ENCODE measurements at regions of chr18 and their contacts with region 1.

Region 1: DNA sequence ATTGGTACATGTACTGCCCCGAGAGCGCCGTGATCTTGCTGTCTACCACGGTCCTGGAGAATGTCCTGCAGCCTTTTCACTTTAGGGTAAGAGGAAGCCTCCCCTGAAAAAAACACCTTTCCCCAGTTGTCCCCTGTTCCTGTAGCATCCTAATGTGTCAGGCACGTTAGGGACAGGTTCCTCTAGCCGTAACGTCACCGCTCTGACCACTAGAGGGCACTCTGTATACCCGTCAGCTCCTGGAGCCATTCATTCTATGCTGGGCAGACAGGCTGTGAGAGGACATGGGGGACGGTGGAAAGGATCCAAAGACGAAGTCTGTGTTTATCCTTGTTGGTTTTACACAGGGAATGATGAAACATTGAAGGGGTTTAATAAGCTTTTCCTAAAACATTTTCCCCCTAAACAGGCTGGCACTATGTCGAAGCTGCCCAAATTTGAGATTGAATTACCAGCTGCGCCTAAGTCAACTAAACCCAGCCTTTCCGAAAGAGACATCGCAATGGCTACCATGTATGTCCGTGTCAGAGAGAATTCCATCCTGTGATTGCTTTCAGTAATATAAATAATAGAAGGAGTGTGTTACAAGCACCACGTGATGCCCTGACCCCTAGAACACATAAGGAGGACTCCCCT is 12.7 kb downstream of the RMC1 start:
- DNase-seq: peak; percentile 39
- ATAC-seq: peak; percentile 99
- H3K4me3 ChIP-seq: no peak overlapping the region
- H3K27ac ChIP-seq: no peak overlapping the region
- H3K4me1 ChIP-seq: peaks cover 3% of the 10 kb centered on the region; the same call in 1 of the 2 replicates
- H3K27me3 ChIP-seq: no peaks in the 10 kb centered on the region
- CTCF ChIP-seq: peak; percentile 89 to 97 (median 94)
- EP300 ChIP-seq: no peak
- POLR2A ChIP-seq: no peak
- RAD21 ChIP-seq: peak; percentile 76

Region 2: DNA sequence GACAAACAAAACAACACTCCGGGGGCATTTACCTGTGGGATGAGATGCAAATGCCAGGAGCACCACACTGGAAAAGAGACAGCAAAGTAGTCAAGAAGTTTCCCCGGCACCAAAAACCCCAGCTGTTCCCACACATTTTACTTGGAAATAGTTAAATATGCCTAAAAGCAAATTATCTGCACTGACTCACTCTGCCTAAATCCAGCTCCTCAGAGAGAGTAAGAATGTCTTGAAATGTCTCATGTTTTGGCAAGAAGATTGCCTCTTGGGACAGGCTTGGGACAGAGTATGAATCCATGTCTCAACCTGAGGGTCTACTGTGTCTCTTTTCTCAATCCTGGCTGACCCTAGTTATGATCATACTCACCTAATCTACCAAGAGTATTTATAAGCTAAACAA is 150.4 kb before region 1 on chr18:
- CTCF ChIA-PET with region 1: no interaction called
- POLR2A ChIA-PET with region 1: no interaction called
- RAD21 ChIA-PET with region 1: no interaction called
- SMC1A ChIA-PET with region 1: no interaction called
- in situ Hi-C with region 1: no loop called
- intact Hi-C with region 1: no loop called
- DNase-seq: no peak
- ATAC-seq: no peak
- H3K4me3 ChIP-seq: no peak overlapping the region
- H3K27ac ChIP-seq: no peak overlapping the region
- H3K4me1 ChIP-seq: no peaks in the 10 kb centered on the region
- H3K27me3 ChIP-seq: no peaks in the 10 kb centered on the region
- CTCF ChIP-seq: no peak
- EP300 ChIP-seq: no peak
- POLR2A ChIP-seq: no peak
- RAD21 ChIP-seq: no peak

Region 3: DNA sequence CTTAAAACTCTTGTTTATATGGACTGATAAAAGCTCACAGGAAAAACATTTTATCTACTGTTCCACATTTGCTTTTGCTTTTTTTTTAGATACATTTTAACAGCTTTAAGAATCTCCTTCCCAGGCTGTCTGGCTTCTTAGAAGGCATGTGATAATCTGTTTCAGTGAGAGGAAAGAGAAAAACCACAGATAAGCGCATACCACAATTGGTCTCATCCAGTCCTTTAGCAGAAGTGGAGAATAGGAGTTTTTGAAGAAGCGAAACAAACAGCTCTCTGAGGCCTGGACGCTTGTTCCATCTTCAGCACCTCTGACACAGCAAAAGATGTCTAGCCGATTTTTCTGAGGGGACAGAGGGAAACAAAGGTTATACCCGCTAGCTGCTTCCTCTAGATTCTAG is 24.8 kb after region 1 on chr18:
- CTCF ChIA-PET with region 1: interaction called, 10 read pairs
- POLR2A ChIA-PET with region 1: interaction called, 7 read pairs
- RAD21 ChIA-PET with region 1: interaction called, 3 read pairs
- SMC1A ChIA-PET with region 1: interaction called, 5 read pairs
- in situ Hi-C with region 1: no loop called
- intact Hi-C with region 1: no loop called
- DNase-seq: peak; percentile 43
- ATAC-seq: peak; percentile 83
- H3K4me3 ChIP-seq: no peak overlapping the region
- H3K27ac ChIP-seq: peak overlapping the region; percentile 47
- H3K4me1 ChIP-seq: peaks cover 31% of the 10 kb centered on the region
- H3K27me3 ChIP-seq: no peaks in the 10 kb centered on the region
- CTCF ChIP-seq: no peak
- EP300 ChIP-seq: peak in 1 of 2 experiments; percentile 48; a peak in 1 of 4 replicates
- POLR2A ChIP-seq: no peak
- RAD21 ChIP-seq: no peak

Region 4: DNA sequence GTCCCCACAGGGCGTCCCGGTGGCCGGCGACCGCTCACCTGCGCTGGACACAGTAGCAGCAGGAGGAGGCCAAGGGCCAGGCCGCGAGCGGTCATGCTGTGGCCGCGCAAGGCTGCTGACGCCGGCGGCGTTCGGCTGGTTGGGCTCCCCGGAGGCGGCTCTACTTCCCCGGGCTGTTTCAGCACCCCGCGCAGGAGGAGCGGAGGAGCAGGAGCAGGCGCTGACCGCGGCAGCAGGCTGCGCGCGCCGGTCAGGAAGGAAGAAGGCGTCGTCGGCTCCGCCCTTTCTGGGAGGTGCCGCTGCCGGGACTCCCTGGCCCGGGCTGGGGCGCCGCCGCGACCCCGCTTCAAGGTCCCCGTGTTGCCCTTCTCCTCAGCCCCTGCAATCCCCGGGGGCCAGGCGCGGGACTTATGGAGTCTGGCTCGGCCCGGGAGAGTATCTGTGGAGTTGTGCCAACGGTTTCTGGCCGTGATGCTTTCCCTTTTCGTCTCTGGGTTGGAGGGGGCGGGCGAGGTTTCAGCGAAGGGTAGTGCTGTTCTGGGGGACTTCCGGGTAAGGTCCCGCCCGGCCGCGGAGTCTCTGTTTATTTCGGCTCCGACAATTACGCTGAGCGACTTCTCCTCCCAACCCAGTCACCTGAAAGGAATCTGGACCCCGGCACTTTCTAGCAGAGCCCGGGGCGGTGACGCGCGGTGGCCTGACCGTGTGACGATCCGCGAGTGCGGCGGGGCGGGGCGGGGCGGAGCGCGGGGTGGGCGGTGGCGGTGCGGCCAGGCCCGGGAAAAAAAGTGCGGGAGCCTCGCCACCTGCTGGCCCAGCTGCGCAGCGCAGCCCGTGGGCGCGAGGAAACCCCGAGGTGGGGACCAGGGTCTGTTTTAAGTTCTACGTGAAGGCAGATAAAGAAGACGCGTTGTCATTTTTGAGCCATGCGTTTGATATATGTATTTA is 70.5 kb after region 1 on chr18 and contains the start of gene NPC1:
- CTCF ChIA-PET with region 1: interaction called, 27 read pairs
- POLR2A ChIA-PET with region 1: interaction called, 5 read pairs
- RAD21 ChIA-PET with region 1: interaction called, 9 read pairs
- SMC1A ChIA-PET with region 1: interaction called, 20 read pairs
- in situ Hi-C with region 1: loop called (anchors 5 kb)
- intact Hi-C with region 1: loop called (anchors 5 kb)
- DNase-seq: peak; percentile 67
- ATAC-seq: peak; percentile 95
- H3K4me3 ChIP-seq: peak within 1 kb of the TSS; percentile 91
- H3K27ac ChIP-seq: peak within 1 kb of the TSS; percentile 96
- H3K4me1 ChIP-seq: peaks cover 7% of the 10 kb centered on the region; the same call in 1 of the 2 replicates
- H3K27me3 ChIP-seq: no peaks in the 10 kb centered on the region
- CTCF ChIP-seq: peak; percentile 81 to 88 (median 85)
- EP300 ChIP-seq: no peak
- POLR2A ChIP-seq: peak; percentile 93
- RAD21 ChIP-seq: peak; percentile 65
- polyA plus RNA-seq, gene NPC1: 10.1 to 11.0 TPM

Region 5: GRCh38 chr18:23703057-23703986 is 187.3 kb after region 1 on chr18:
- CTCF ChIA-PET with region 1: interaction called, 37 read pairs
- POLR2A ChIA-PET with region 1: no interaction called
- RAD21 ChIA-PET with region 1: interaction called, 13 read pairs
- SMC1A ChIA-PET with region 1: interaction called, 10 read pairs
- in situ Hi-C with region 1: no loop called
- intact Hi-C with region 1: loop called (anchors 1 kb)
- DNase-seq: no peak
- ATAC-seq: peak; percentile 92
- H3K4me3 ChIP-seq: no peak overlapping the region
- H3K27ac ChIP-seq: no peak overlapping the region
- H3K4me1 ChIP-seq: no peaks in the 10 kb centered on the region
- H3K27me3 ChIP-seq: no peaks in the 10 kb centered on the region
- CTCF ChIP-seq: peak; percentile 35 to 79 (median 41); a peak in 5 of 6 replicates
- EP300 ChIP-seq: no peak
- POLR2A ChIP-seq: no peak
- RAD21 ChIP-seq: peak; percentile 95

Measured in GM12878 (cell line).